Motor neuron (in vitro differentiated cells): ENCODE measurements at regions of chr3 and their contacts with region 1.

Region 1: DNA sequence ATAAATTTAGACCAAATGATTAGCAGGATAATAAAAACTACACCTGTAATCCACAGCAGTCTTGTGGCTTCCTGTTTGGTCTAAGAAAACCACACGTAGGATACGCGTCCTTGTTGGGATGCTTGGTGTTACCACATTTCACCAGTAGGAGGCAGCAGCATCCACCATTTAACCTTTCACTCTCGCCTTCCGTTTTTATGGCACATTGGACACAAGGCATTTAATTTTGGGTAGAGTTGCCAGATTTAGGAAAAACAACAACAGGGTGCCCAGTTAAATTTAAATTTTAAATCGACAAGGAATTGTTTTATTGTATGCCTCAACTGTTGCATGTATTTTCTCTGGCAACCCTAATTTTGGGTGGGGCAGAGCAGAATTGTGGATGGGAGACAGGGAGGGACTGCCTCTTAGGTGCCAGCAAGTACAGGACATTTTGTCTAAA is 6.3 kb downstream of the LRRC31 start:
- ATAC-seq: peak in 4 of 8 experiments; percentile 35 to 88 (median 83)
- H3K4me3 ChIP-seq: no peak overlapping the region
- H3K27ac ChIP-seq: no peak overlapping the region
- H3K4me1 ChIP-seq: no peaks in the 10 kb centered on the region

Region 2: GRCh38 chr3:170055209-170055608 is 191.7 kb after region 1 on chr3:
- in situ Hi-C with region 1: loop called in 1 of 9 experiments (anchors 25 kb)
- ATAC-seq: no peak
- H3K4me3 ChIP-seq: no peak overlapping the region
- H3K27ac ChIP-seq: no peak overlapping the region
- H3K4me1 ChIP-seq: no peaks in the 10 kb centered on the region

Region 3: DNA sequence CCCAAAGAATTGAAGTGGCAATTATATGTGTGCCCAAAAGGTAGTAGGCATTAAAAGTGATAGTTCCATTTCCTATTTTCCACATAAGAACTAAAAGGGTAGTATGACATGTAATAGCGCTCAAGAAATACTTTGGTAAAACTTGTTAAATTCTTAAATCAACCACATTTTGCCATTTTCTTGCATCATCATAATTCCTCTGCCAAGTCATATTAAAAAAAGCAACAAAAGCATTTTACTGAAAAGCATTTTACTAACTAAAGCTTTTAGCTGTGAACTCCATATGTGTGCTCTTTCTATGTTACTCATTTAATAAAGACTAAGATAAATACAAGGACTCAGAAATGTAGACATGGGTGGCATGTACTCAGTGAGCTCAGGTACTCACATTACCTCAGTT is 244.5 kb after region 1 on chr3:
- in situ Hi-C with region 1: no loop called
- ATAC-seq: no peak
- H3K4me3 ChIP-seq: no peak overlapping the region
- H3K27ac ChIP-seq: no peak overlapping the region
- H3K4me1 ChIP-seq: no peaks in the 10 kb centered on the region